ENCODE measurements at regions of chr5 and their contacts with region 1.

Region 1: GRCh38 chr5:68252673-68253623 is 37.4 kb downstream of the PIK3R1 start:
- DNase-seq: peak; percentile 81
- H3K4me3 Mint-ChIP-seq: no peak overlapping the region
- H3K27ac Mint-ChIP-seq: no peak overlapping the region
- H3K4me1 Mint-ChIP-seq: peaks cover 61% of the 10 kb centered on the region
- H3K27me3 Mint-ChIP-seq: no peaks in the 10 kb centered on the region

Region 2: GRCh38 chr5:67246108-67246507 is 1006.8 kb before region 1 on chr5:
- intact Hi-C with region 1: loop called (anchors 5 kb)
- DNase-seq: peak; percentile 77
- H3K4me3 Mint-ChIP-seq: no peak overlapping the region
- H3K27ac Mint-ChIP-seq: no peak overlapping the region
- H3K4me1 Mint-ChIP-seq: peaks cover 7% of the 10 kb centered on the region
- H3K27me3 Mint-ChIP-seq: no peaks in the 10 kb centered on the region

Region 3: GRCh38 chr5:67537439-67538148 is 715.4 kb before region 1 on chr5:
- intact Hi-C with region 1: no loop called
- DNase-seq: no peak
- H3K4me3 Mint-ChIP-seq: no peak overlapping the region
- H3K27ac Mint-ChIP-seq: no peak overlapping the region
- H3K4me1 Mint-ChIP-seq: no peaks in the 10 kb centered on the region
- H3K27me3 Mint-ChIP-seq: no peaks in the 10 kb centered on the region

Region 4: DNA sequence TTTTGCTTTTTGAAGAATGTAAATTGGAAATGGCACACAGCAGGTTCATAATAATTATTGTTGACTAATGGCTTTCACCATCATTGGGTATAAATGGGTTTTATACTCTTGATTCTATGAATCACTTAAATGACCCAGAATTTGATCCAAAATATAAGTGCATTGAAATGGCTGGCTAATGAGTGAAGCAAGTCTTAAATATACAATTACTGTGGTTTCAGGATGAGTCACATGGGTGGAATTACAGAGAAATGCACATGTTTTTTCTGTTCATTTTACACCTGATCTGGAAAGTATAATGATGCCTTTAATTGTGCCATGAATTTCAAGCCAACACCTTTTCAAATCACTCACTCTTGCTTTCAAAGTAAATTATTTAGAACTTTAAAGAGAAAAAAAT is 675.5 kb before region 1 on chr5:
- intact Hi-C with region 1: no loop called
- DNase-seq: no peak
- H3K4me3 Mint-ChIP-seq: no peak overlapping the region
- H3K27ac Mint-ChIP-seq: no peak overlapping the region
- H3K4me1 Mint-ChIP-seq: no peaks in the 10 kb centered on the region
- H3K27me3 Mint-ChIP-seq: peaks cover 5% of the 10 kb centered on the region

Region 5: GRCh38 chr5:68070591-68071281 is 182.2 kb before region 1 on chr5:
- intact Hi-C with region 1: loop called (anchors 10 kb)
- DNase-seq: no peak
- H3K4me3 Mint-ChIP-seq: no peak overlapping the region
- H3K27ac Mint-ChIP-seq: no peak overlapping the region
- H3K4me1 Mint-ChIP-seq: no peaks in the 10 kb centered on the region
- H3K27me3 Mint-ChIP-seq: no peaks in the 10 kb centered on the region

Region 6: DNA sequence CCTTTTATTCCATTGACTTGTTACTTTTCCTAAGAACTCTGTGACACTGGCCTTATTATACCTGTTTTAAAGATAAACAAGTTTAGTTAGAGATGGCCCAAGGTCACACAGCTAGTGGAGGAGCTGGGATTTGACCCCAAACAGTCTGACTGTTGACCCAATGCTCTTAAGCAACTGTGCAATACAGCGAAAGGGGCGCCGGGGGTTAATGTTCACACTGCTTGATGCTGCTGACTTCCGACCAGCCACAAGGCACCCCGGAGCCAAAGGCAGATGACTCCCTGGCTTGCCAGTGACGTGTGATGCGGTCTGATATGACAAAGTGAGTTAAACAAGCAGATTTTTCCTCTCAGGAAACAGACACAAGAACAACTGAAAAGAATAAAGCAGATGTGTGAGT is 13.5 kb before region 1 on chr5:
- intact Hi-C with region 1: loop called (anchors 1 kb)
- DNase-seq: peak; percentile 92
- H3K4me3 Mint-ChIP-seq: peak overlapping the region; percentile 77
- H3K27ac Mint-ChIP-seq: peak overlapping the region; percentile 86
- H3K4me1 Mint-ChIP-seq: peaks cover 56% of the 10 kb centered on the region
- H3K27me3 Mint-ChIP-seq: no peaks in the 10 kb centered on the region

Measured in activated CD4-positive, alpha-beta T cell treated with anti-CD3 and anti-CD28 coated beads, Interleukin-2, amount 10 ng/mL, durations not matched to agents 24 days and 14 days (primary cell).